ENCODE measurements at regions of chr10 and their contacts with region 1.

Region 1: DNA sequence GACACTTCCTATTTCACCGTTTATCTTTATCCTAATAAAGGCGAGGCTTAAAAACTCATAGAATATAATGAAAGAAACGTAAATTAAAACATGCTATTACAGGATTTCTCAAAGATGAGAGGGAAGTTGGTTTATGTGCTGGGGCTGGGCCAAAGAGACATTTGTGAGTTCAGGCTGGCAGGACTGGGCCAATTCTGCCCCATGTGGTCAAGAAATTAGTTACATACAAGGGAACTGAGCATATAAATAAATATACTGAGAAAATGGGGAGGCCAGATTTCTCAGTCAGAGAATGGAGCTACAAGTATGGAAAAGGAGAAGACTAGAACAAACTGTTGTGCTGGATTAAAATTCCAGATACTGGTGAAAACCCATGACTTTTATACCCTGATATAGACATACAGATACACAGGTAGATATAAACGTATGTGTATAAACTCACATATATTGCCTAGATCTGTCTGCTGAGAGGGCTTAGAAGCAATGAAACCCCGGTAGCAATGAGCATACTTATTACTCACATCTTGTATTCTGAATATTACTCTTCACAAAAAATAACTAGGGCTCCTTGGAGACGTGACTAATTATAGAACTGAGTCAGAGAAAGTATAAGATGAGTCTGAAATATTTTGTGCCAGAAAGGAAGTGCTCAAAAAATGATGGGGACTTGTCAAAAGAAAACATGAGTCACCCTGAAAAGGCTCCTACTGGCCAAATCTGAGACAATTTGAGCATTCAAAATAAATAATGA is 155.7 kb upstream of the FGFR2 start:
- DNase-seq: peak; percentile 88
- H3K4me3 ChIP-seq: peak overlapping the region in 1 of 3 experiments; percentile 20
- H3K27ac ChIP-seq: peak overlapping the region; percentile 98
- H3K4me1 ChIP-seq: peaks cover 17% of the 10 kb centered on the region
- H3K27me3 ChIP-seq: no peaks in the 10 kb centered on the region
- CTCF ChIP-seq: peak; percentile 38 to 42

Region 2: DNA sequence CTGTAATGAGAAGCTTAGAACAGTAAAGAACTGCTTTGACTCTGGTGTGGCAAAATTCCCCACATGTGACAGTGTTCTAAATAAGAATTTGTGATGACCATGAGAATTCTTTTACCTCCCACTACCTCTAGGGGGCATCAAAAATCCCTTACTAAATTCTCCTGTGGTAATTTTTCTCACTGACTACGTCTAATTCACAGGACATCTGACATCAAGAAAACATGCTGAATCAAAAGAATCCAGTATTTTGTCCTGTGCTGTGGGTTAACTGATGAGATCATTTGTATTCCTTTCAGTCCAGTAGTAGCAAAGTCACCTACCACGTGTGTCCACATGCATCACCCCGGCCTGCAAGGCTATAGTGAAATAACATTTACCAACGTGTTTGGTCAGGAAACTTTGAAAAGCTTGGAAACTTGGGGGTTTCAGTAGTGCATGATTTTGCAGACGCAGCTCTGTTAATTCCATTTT is 70.1 kb after region 1 on chr10:
- CTCF ChIA-PET with region 1: no interaction called
- dilution Hi-C with region 1: no loop called
- in situ Hi-C with region 1: no loop called
- intact Hi-C with region 1: loop called (anchors 5 kb)
- DNase-seq: peak; percentile 21
- H3K4me3 ChIP-seq: no peak overlapping the region
- H3K27ac ChIP-seq: no peak overlapping the region
- H3K4me1 ChIP-seq: no peaks in the 10 kb centered on the region
- H3K27me3 ChIP-seq: no peaks in the 10 kb centered on the region
- CTCF ChIP-seq: peak; percentile 72 to 73

Region 3: GRCh38 chr10:122861711-122862161 is 1107.8 kb after region 1 on chr10:
- CTCF ChIA-PET with region 1: no interaction called
- dilution Hi-C with region 1: no loop called
- in situ Hi-C with region 1: no loop called
- intact Hi-C with region 1: no loop called
- DNase-seq: peak; percentile 36
- H3K4me3 ChIP-seq: no peak overlapping the region
- H3K27ac ChIP-seq: peak overlapping the region; percentile 96
- H3K4me1 ChIP-seq: peaks cover 25% of the 10 kb centered on the region
- H3K27me3 ChIP-seq: no peaks in the 10 kb centered on the region
- CTCF ChIP-seq: no peak

Measured in mammary epithelial cell (primary cell).